ENCODE measurements at regions of chr11 and their contacts with region 1.

Region 1: GRCh38 chr11:83115551-83115950 is 41.4 kb upstream of the PCF11 start:
- DNase-seq: peak in 1 of 35 experiments; percentile 4
- ATAC-seq: no peak
- H3K4me3 ChIP-seq: no peak overlapping the region
- H3K4me3 Mint-ChIP-seq: peak overlapping the region; percentile 52 to 87 (median 65)
- H3K27ac ChIP-seq: no peak overlapping the region
- H3K27ac Mint-ChIP-seq: peak overlapping the region in 1 of 2 donors; percentile 57
- H3K4me1 ChIP-seq: peaks cover 5 to 24% of the 10 kb centered on the region in 2 experiments
- H3K4me1 Mint-ChIP-seq: peaks cover 49 to 53% (median 52%) of the 10 kb centered on the region in 3 donors
- H3K27me3 ChIP-seq: no peaks in the 10 kb centered on the region
- H3K27me3 Mint-ChIP-seq: no peaks in the 10 kb centered on the region

Region 2: DNA sequence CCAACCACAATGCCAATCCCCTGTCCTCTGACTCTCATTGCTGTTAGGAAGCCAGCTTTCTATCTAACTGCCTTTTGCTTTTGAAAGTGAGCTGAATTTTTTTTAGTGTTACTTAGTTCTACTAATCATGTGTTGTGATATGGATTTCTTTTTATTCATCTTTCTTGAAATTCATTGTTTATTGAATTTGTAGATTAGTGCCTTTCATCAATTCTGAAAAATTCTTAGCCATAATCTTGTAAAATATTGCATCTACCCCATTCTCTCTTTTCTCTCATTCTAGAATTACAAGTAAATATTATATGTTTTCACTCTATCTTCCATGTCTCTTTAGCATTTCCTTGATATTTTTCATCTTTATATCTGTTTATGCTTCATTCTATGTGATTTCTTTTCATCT is 166.2 kb before region 1 on chr11:
- CTCF ChIA-PET with region 1: no interaction called
- POLR2A ChIA-PET with region 1: no interaction called
- DNase-seq: no peak
- ATAC-seq: no peak
- H3K4me3 ChIP-seq: no peak overlapping the region
- H3K4me3 Mint-ChIP-seq: no peak overlapping the region
- H3K27ac ChIP-seq: no peak overlapping the region
- H3K27ac Mint-ChIP-seq: no peak overlapping the region
- H3K4me1 ChIP-seq: no peaks in the 10 kb centered on the region
- H3K4me1 Mint-ChIP-seq: peaks cover 3 to 16% (median 14%) of the 10 kb centered on the region in 3 donors
- H3K27me3 ChIP-seq: no peaks in the 10 kb centered on the region
- H3K27me3 Mint-ChIP-seq: no peaks in the 10 kb centered on the region

Region 3: GRCh38 chr11:83102834-83103233 is 12.7 kb before region 1 on chr11:
- CTCF ChIA-PET with region 1: no interaction called
- POLR2A ChIA-PET with region 1: interaction called in 1 of 2 experiments, 15 read pairs
- DNase-seq: no peak
- ATAC-seq: no peak
- H3K4me3 ChIP-seq: no peak overlapping the region
- H3K4me3 Mint-ChIP-seq: no peak overlapping the region
- H3K27ac ChIP-seq: no peak overlapping the region
- H3K27ac Mint-ChIP-seq: no peak overlapping the region
- H3K4me1 ChIP-seq: no peaks in the 10 kb centered on the region
- H3K4me1 Mint-ChIP-seq: no peaks in the 10 kb centered on the region
- H3K27me3 ChIP-seq: peaks cover 0 to 2% of the 10 kb centered on the region in 2 experiments
- H3K27me3 Mint-ChIP-seq: peaks cover 1 to 7% of the 10 kb centered on the region in 2 donors

Region 4: GRCh38 chr11:83278351-83278750 is 162.8 kb after region 1 on chr11:
- CTCF ChIA-PET with region 1: no interaction called
- POLR2A ChIA-PET with region 1: no interaction called
- DNase-seq: no peak
- ATAC-seq: no peak
- H3K4me3 ChIP-seq: no peak overlapping the region
- H3K4me3 Mint-ChIP-seq: no peak overlapping the region
- H3K27ac ChIP-seq: no peak overlapping the region
- H3K27ac Mint-ChIP-seq: no peak overlapping the region
- H3K4me1 ChIP-seq: no peaks in the 10 kb centered on the region
- H3K4me1 Mint-ChIP-seq: peaks cover 28 to 37% (median 30%) of the 10 kb centered on the region in 3 donors
- H3K27me3 ChIP-seq: no peaks in the 10 kb centered on the region
- H3K27me3 Mint-ChIP-seq: no peaks in the 10 kb centered on the region

Measured in T-cell (primary cell).